Mammary epithelial cell (primary cell): ENCODE measurements at regions of chr3 and their contacts with region 1.

Region 1: GRCh38 chr3:185824476-185825378 is at the start of gene IGF2BP2:
- DNase-seq: peak; percentile 83
- H3K4me3 ChIP-seq: peak within 1 kb of the TSS; percentile 89 to 96 (median 90)
- H3K27ac ChIP-seq: peak within 1 kb of the TSS; percentile 89
- H3K4me1 ChIP-seq: peaks cover 11% of the 10 kb centered on the region
- H3K27me3 ChIP-seq: no peaks in the 10 kb centered on the region
- CTCF ChIP-seq: no peak
- total RNA-seq, gene IGF2BP2: 67.7 to 195 TPM

Region 2: GRCh38 chr3:185215873-185216606 is 608.7 kb before region 1 on chr3:
- CTCF ChIA-PET with region 1: no interaction called
- dilution Hi-C with region 1: no loop called
- in situ Hi-C with region 1: no loop called
- intact Hi-C with region 1: no loop called
- DNase-seq: peak; percentile 14
- H3K4me3 ChIP-seq: no peak overlapping the region
- H3K27ac ChIP-seq: no peak overlapping the region
- H3K4me1 ChIP-seq: no peaks in the 10 kb centered on the region
- H3K27me3 ChIP-seq: no peaks in the 10 kb centered on the region
- CTCF ChIP-seq: peak; percentile 35 to 67

Region 3: DNA sequence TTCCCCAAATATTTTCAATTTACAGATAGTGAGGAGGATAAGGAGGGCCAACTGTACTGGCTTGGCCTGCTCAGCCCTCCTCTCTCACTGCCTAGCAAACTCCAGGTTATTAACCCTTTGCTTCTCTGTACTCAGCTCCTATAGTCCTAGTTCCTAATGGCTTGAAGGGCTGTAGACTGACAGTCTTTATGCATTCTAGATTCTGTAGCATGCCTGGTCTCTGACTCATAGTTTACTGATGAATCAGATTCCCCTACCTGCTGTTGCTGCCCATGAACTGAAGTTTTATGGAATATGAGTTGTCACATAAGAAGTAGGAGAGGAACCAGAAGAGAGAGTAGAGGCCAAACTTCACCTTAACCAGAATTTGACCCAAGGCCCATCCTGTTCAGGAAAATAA is 488.9 kb before region 1 on chr3:
- CTCF ChIA-PET with region 1: no interaction called
- dilution Hi-C with region 1: no loop called
- in situ Hi-C with region 1: no loop called
- intact Hi-C with region 1: no loop called
- DNase-seq: peak; percentile 89
- H3K4me3 ChIP-seq: no peak overlapping the region
- H3K27ac ChIP-seq: no peak overlapping the region
- H3K4me1 ChIP-seq: peaks cover 18% of the 10 kb centered on the region
- H3K27me3 ChIP-seq: no peaks in the 10 kb centered on the region
- CTCF ChIP-seq: no peak

Region 4: DNA sequence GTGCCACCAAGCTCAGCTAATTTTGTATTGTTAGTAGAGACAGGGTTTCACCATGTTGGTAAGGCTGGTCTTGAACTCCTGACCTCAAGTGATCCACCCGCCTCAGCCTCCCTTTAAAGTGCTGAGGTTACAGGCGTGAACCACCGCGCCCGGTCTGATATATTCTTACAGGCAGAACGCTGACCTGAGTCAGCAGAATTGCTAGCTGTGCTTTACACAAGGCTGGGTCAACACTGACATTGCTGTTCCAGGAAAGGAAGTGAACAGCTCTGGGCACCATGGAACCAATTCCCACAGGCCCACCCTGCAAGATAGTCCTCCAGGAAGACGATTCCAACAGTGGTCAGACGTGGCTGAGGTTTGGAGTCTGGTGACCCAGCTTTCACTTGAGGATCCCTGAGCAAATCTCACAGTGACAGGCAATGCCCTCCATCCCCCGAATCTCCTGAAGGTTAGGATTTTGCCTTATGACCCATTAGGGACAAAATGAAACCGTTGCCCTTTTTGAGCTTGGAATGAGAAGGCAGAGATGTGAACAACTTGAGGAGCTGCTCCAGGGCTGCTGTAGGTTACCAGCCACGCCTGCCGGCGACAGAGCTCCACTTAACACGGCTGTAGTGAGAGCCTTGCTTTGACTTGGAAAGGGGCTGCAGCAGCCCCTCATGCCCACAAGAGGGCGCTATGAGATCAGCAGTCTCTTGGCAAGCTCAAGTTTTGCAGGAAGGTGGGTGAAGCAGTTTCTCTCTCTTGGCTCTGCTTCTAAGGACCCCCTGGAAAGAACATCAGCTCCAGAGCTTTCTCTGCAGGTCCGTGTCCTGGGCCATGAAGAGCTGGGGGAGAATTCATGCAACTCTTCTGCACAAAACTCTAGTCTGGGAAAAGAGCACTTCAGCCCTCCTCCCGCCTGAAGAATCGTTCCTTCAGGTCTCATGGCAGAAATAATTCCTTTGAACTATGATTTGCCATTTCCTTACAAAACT is 164.5 kb before region 1 on chr3:
- CTCF ChIA-PET with region 1: interaction called, 3 read pairs
- dilution Hi-C with region 1: no loop called
- in situ Hi-C with region 1: no loop called
- intact Hi-C with region 1: loop called (anchors 2 kb)
- DNase-seq: peak; percentile 62
- H3K4me3 ChIP-seq: no peak overlapping the region
- H3K27ac ChIP-seq: peak overlapping the region; percentile 48
- H3K4me1 ChIP-seq: peaks cover 60% of the 10 kb centered on the region
- H3K27me3 ChIP-seq: no peaks in the 10 kb centered on the region
- CTCF ChIP-seq: peak; percentile 98 to 99

Region 5: GRCh38 chr3:185733980-185734724 is 90.6 kb before region 1 on chr3:
- CTCF ChIA-PET with region 1: interaction called, 7 read pairs
- dilution Hi-C with region 1: no loop called
- in situ Hi-C with region 1: no loop called
- intact Hi-C with region 1: loop called (anchors 1 kb)
- DNase-seq: peak; percentile 80
- H3K4me3 ChIP-seq: no peak overlapping the region
- H3K27ac ChIP-seq: peak overlapping the region; percentile 99
- H3K4me1 ChIP-seq: peaks cover 76% of the 10 kb centered on the region
- H3K27me3 ChIP-seq: no peaks in the 10 kb centered on the region
- CTCF ChIP-seq: peak; percentile 77 to 80

Region 6: DNA sequence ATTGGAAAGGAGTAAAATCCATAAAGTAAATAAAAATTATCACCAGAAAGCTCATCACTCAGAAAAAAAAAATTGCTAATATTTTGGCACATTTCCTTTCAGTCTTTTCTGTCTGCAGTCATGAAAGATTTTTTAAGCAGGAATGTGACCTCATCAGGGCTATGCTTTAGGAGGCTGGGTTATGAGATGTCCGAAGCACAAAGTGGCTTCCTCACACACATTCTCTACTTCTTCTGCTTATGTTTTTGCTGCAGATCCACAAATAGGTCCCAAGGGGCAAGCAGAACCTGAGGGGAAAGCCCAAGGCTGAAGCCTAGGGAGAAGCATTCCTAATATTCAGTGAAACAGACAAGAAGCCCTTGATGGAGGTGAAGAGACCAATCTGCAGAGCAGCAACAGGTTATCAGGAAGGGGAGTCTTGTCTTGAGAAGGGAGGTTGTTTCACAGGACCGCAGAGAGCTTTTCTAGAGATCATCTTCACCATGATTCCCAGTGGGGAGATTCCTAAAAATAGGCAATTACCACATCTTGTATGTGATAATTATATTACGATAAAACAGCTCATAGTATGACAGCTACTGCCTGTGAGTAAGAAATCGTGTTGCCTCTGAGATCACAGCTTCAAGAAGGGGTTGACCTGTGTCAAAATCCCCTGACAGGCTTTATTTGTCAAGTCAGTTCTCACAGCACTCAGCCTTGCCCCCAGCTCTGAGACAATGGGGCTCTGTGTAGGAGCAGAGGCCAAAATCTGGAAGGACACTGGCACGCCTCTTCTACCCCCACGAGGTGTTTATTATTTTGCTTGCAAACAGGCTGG is 60.4 kb before region 1 on chr3:
- CTCF ChIA-PET with region 1: no interaction called
- dilution Hi-C with region 1: no loop called
- in situ Hi-C with region 1: no loop called
- intact Hi-C with region 1: loop called (anchors 2 kb)
- DNase-seq: peak; percentile 61
- H3K4me3 ChIP-seq: no peak overlapping the region
- H3K27ac ChIP-seq: peak overlapping the region; percentile 0
- H3K4me1 ChIP-seq: peaks cover 58% of the 10 kb centered on the region
- H3K27me3 ChIP-seq: no peaks in the 10 kb centered on the region
- CTCF ChIP-seq: no peak

Region 7: GRCh38 chr3:185900226-185900625 is 75.5 kb after region 1 on chr3:
- CTCF ChIA-PET with region 1: interaction called, 3 read pairs
- dilution Hi-C with region 1: loop called (anchors 5 kb)
- in situ Hi-C with region 1: no loop called
- intact Hi-C with region 1: loop called (anchors 2 kb)
- DNase-seq: peak; percentile 98
- H3K4me3 ChIP-seq: no peak overlapping the region
- H3K27ac ChIP-seq: no peak overlapping the region
- H3K4me1 ChIP-seq: peaks cover 10% of the 10 kb centered on the region
- H3K27me3 ChIP-seq: no peaks in the 10 kb centered on the region
- CTCF ChIP-seq: no peak